ENCODE measurements at regions of chr12 and their contacts with region 1.

Region 1: DNA sequence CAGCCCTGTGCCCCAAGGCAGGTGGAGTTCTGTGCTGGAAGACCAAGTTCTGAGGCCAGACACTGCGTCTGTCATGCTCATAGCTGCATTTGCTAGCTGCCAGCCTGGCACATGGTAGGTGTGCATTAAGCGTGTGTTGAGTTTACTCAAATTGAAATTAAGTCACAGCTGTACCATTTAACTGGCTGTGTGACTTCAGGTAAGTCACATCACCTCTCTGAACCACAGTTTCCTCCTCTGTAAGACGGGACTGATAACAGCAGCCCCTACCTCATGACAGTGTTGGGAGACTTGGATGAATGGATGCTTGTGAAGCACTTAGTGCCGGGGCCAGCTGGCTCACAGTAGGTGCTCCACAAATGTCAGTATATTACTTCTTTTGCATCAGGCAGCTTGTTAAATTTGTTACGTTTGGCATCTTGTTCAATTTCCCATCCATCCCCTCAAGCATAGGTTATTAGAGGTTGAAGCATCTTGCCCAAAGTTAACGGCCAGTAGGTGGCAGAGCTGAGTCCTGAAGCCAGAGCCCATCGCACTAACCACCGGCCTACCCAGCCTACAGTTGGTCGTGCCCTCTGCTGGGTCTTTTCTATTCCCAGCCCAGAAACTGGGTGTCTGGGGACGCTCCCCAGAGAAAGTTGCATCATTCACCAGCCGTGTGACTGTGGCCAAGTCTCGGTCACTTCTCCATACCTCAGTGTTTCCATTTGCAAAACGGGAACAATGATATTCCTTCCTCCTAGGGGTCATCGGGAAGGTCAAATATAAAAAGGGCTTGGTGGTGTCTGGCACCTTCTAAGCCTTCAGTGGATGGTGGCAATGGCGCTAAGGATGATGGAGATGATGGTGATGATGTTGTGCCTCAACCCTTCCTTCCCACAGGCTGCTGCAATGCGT is 4.5 kb downstream of the DAO start:
- DNase-seq: peak; percentile 15 to 90
- H3K4me3 ChIP-seq: no peak overlapping the region
- H3K27ac ChIP-seq: no peak overlapping the region
- H3K4me1 ChIP-seq: peaks cover 0 to 5% (median 3%) of the 10 kb centered on the region in 4 experiments; a peak in 5 of 7 replicates
- H3K27me3 ChIP-seq: no peaks in the 10 kb centered on the region
- CTCF ChIP-seq: peak; percentile 73 to 84 (median 77)
- EP300 ChIP-seq: no peak
- POLR2A ChIP-seq: no peak
- RAD21 ChIP-seq: peak; percentile 55 to 73

Region 2: GRCh38 chr12:108759924-108760323 is 124.4 kb before region 1 on chr12:
- CTCF ChIA-PET with region 1: no interaction called
- POLR2A ChIA-PET with region 1: no interaction called
- DNase-seq: no peak
- H3K4me3 ChIP-seq: no peak overlapping the region
- H3K27ac ChIP-seq: no peak overlapping the region
- H3K4me1 ChIP-seq: no peaks in the 10 kb centered on the region
- H3K27me3 ChIP-seq: no peaks in the 10 kb centered on the region
- CTCF ChIP-seq: no peak
- EP300 ChIP-seq: no peak
- POLR2A ChIP-seq: no peak
- RAD21 ChIP-seq: no peak

Region 3: DNA sequence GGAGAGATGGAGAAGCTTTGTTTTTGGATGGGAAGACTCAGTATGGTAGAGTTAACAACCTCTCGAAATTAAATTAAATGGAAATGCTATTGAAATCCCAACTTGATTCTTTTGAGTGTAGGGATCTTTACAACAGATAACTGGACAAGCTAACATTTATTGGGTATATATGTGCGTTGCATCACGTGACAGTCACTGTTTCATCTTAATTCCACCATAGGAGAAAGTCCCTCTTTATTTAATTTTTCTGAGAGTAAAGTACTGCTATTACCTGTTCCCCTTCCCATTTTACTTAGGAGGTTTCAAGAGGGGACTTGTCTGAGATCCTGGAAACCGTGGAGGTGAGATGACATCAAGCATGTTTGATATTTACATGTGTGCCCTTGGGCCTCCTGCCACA is 15.6 kb before region 1 on chr12:
- CTCF ChIA-PET with region 1: interaction called, 25 read pairs
- POLR2A ChIA-PET with region 1: interaction called, 5 read pairs
- DNase-seq: no peak
- H3K4me3 ChIP-seq: no peak overlapping the region
- H3K27ac ChIP-seq: no peak overlapping the region
- H3K4me1 ChIP-seq: no peaks in the 10 kb centered on the region
- H3K27me3 ChIP-seq: no peaks in the 10 kb centered on the region
- CTCF ChIP-seq: no peak
- EP300 ChIP-seq: no peak
- POLR2A ChIP-seq: no peak
- RAD21 ChIP-seq: no peak

Region 4: DNA sequence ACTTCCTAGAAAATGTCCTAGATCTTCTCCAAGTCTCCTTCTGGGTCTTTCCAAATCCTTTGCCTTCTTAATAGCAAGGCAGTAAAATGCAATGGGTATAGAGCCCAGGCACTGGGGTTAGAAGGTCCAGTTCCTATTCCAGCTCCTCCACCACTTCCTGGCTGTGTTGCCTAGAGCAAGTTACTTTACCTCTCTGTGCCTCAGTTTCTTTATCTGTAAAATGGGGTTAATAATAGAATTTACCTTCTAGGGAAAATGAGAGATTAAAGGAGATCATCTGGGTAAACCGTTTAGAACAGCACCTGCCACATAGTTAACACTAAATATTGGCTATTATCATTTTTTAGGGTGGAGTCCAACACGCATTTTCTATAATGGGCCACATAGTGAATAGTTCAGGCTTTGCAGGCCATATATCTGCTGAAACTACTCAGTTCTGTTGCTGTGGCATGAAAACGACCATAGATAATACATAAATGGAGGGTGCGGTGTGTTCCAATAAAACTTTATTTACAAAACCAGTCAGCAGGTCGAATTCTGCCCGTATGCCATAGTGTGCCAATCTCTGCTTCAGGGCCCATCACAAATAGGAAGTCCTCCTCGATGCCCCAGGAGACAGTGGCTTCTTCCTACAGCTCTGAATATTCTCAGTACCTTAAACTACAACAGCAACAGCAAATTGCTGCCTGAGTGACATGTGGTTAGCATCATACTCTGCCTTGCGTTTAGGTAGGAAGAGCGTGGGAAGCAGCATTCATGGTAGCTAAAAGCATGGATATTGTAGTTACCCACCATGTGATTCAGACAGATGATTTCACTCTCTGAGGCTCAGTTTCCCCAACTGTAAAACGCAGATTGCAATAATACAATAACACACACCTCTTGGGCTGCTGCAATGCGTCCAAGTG is 75.6 kb after region 1 on chr12:
- CTCF ChIA-PET with region 1: interaction called, 24 read pairs
- POLR2A ChIA-PET with region 1: no interaction called
- DNase-seq: no peak
- H3K4me3 ChIP-seq: no peak overlapping the region
- H3K27ac ChIP-seq: no peak overlapping the region
- H3K4me1 ChIP-seq: no peaks in the 10 kb centered on the region
- H3K27me3 ChIP-seq: no peaks in the 10 kb centered on the region
- CTCF ChIP-seq: no peak
- EP300 ChIP-seq: no peak
- POLR2A ChIP-seq: no peak
- RAD21 ChIP-seq: no peak

Region 5: DNA sequence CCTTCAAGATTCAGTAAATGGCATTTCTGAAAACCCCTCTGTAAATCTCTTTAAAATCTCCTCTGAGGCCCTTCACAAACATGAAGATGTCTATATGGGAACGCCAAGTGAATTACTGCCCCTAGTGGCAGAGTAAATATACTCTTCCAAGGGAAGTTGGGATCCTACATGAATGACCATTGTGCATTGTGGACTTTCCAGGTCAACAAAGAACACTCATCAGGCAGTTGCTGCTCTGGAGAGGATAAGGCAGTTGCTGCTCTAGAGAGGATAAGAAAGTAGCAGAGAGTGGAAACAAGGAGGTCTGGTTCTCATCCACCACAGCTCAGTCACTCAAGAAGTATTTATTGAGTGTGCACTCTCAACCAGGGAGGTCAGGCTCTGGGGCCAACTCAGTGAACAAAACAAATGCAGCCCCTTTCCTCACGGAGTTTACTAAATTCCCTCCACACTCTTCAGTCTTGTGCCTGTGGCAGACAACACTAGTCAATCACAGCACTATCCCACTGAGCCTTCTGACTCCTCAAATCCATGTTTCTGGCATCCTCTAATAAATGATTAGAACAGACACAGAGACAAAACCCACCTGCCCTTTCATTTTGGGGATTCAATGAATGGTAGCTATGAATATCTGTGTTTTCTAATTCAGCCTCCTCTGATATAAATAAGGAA is 83.6 kb after region 1 on chr12:
- CTCF ChIA-PET with region 1: interaction called, 10 read pairs
- POLR2A ChIA-PET with region 1: no interaction called
- DNase-seq: no peak
- H3K4me3 ChIP-seq: no peak overlapping the region
- H3K27ac ChIP-seq: no peak overlapping the region
- H3K4me1 ChIP-seq: no peaks in the 10 kb centered on the region
- H3K27me3 ChIP-seq: no peaks in the 10 kb centered on the region; a peak in 1 of 7 replicates
- CTCF ChIP-seq: peak in 2 of 3 experiments; percentile 40 to 71; a peak in 2 of 4 replicates
- EP300 ChIP-seq: no peak
- POLR2A ChIP-seq: no peak
- RAD21 ChIP-seq: peak; percentile 31 to 55

Measured in H1 (cell line).